ENCODE measurements at regions of chr9 and their contacts with region 1.

Region 1: GRCh38 chr9:133184962-133185361 is 21.2 kb upstream of the GBGT1 start:
- DNase-seq: peak; percentile 77
- ATAC-seq: peak; percentile 55
- H3K4me3 Mint-ChIP-seq: peak overlapping the region; percentile 31
- H3K27ac Mint-ChIP-seq: no peak overlapping the region
- H3K4me1 Mint-ChIP-seq: peaks cover 16% of the 10 kb centered on the region
- H3K27me3 Mint-ChIP-seq: peaks cover 30% of the 10 kb centered on the region
- CTCF ChIP-seq: peak; percentile 60

Region 2: DNA sequence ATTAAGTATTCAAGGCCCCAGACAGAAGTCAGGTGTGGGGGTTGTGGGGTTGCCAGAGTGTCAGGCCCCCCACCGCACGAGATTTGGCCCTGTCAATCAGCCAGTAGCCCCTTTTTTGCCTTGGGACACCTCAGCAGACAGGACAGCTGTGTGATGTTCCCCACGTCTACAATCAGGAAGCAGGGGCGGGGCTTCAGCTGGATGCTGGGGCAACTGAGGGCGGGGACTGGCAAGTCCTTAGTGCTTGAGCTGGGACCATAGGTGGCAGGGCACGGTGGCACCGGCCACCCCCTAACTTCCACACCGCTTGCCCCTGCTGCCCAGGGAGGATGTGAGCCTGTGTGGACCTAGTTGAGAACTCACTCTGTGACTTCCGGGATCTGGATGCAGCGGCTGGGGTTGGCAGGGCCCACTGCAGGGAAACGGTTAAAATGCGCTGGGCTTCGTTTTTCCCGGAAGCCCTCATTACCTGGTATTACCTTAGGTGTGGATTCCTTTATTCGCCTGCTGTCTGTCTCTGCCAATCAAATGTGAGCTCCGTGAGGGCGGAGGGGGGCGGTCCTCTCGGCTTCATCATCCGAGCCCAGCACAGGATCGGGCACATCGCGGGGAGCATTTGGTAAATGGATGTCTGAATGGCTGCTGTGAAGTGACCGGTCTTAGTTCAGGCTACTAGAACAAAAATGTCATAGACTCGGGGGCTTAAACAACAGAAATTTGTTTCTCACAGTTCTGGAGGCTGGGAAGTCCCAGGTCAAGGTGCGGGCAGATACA is 161.7 kb before region 1 on chr9:
- CTCF ChIA-PET with region 1: interaction called, 13 read pairs
- POLR2A ChIA-PET with region 1: no interaction called
- intact Hi-C with region 1: no loop called
- DNase-seq: peak; percentile 90
- ATAC-seq: peak; percentile 74
- H3K4me3 Mint-ChIP-seq: peak overlapping the region; percentile 70
- H3K27ac Mint-ChIP-seq: peak overlapping the region; percentile 77
- H3K4me1 Mint-ChIP-seq: peaks cover 23% of the 10 kb centered on the region
- H3K27me3 Mint-ChIP-seq: peaks cover 3% of the 10 kb centered on the region
- CTCF ChIP-seq: no peak

Region 3: DNA sequence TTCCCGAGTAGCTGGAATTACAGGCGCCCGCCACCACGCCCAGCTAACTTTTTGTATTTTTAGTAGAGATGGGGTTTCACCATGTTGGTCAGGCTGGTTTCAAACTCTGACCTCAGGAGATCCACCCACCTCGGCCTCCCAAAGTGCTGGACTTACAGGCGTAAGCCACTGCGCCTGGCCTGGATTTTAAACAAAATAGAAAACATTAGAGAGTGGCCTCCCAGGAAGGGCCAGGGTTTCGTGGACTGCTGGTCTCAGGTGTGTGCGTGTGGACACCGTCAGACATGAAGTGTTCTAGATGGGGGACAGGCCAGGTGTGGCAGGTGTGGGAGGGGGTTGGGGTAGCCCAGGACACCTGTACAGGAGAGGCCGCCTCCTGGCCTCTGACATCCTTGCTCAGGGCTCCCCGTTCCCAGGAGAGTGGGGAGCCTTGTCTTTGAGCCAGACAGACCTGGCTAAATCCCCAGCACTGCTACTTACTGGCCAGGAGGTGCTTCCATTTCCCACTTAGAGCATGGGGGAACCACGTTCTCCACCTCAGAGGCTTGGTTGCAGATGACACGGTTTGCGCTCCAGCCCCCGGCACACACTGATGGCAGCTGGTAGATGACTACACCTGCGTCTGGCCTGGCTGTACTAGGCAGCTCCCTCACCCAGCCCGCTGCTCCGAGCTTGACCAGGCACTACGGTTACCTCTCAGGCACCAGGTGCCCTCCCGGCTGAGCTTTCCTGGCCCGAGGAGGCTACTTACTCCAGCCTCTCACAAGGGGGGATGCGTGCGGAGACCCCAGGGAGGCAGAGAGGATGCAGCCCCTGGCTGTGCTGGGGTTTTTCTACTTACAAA is 14.0 kb before region 1 on chr9:
- CTCF ChIA-PET with region 1: interaction called, 33 read pairs
- POLR2A ChIA-PET with region 1: no interaction called
- intact Hi-C with region 1: no loop called
- DNase-seq: no peak
- ATAC-seq: no peak
- H3K4me3 Mint-ChIP-seq: no peak overlapping the region
- H3K27ac Mint-ChIP-seq: no peak overlapping the region
- H3K4me1 Mint-ChIP-seq: no peaks in the 10 kb centered on the region
- H3K27me3 Mint-ChIP-seq: peaks cover 2% of the 10 kb centered on the region
- CTCF ChIP-seq: no peak

Region 4: DNA sequence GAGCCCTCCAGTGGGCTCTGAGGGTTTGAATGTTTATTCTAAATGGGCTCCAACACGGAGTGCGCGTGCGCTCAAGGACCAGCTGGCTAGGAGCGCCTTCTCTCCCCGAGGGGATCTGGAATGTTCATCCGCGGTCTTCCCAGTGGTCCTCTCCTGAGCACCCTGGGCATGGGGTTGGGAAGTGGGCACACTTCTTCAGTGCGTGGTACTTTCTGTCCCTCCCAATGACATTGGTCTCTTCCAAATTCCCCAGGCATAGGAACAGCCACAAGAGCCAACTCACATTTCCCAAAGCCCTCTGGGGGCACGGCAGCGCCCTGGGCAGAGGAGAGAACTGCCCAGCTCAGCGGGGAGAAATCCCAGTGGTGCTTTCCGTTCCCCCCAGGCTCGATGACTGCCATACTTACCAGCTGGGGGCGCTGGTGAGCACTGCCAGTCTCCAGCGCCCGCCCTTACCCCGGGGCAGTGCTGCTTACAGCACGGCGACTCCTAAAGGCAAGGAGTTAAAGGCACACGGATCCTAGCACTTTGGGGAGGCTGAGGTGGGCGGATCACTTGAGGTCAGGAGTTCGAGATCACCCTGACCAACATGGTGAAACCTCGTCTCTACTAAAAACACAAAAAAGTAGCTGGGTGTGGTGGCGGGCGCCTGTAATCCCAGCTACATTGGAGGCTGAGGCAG is 54.0 kb after region 1 on chr9:
- CTCF ChIA-PET with region 1: interaction called, 14 read pairs
- POLR2A ChIA-PET with region 1: no interaction called
- intact Hi-C with region 1: no loop called
- DNase-seq: peak; percentile 85
- ATAC-seq: peak; percentile 97
- H3K4me3 Mint-ChIP-seq: peak overlapping the region; percentile 54
- H3K27ac Mint-ChIP-seq: no peak overlapping the region
- H3K4me1 Mint-ChIP-seq: peaks cover 3% of the 10 kb centered on the region
- H3K27me3 Mint-ChIP-seq: peaks cover 11% of the 10 kb centered on the region
- CTCF ChIP-seq: peak; percentile 83

Region 5: DNA sequence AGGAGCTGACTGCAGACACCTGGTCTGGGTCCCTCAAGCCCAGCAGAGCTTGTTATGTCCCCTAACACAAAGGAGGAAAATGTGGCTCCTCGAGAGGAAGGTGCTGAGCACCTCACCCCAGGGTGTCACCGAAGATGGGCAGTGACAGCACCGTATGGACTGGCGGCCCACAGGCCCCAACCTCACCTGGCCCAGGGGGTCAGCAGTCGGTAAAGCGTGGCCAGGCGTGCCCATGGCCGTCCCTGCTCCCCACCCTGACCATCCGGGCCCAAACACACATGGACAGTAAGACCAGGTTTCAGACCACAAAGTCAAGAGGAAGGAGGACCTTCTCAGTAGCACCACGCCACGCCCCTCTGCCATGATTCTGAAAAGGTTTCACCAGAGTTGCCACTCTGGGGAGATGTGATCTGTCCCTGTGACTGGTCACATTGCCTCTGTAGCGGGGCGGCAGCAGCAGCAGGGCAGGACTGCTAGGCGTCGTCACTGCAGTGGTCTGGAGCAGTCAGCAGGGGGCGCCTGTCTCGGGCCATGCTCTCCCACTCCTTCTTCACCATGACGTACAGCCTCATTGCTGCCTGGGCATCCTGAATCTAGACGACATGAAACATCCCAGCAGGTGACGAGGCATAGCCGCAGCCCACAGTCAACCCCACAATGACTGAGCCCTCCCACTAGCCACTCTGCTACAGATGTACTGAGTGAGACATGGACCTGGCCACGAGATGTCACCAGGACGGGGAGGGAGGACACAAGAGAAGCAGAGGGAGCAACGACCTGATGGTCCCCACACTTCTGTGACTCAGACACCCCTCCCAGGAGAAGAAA is 221.7 kb after region 1 on chr9:
- CTCF ChIA-PET with region 1: interaction called, 10 read pairs
- POLR2A ChIA-PET with region 1: no interaction called
- intact Hi-C with region 1: loop called (anchors 10 kb)
- DNase-seq: peak; percentile 89
- ATAC-seq: peak; percentile 96
- H3K4me3 Mint-ChIP-seq: no peak overlapping the region
- H3K27ac Mint-ChIP-seq: peak overlapping the region; percentile 78
- H3K4me1 Mint-ChIP-seq: peaks cover 11% of the 10 kb centered on the region
- H3K27me3 Mint-ChIP-seq: no peaks in the 10 kb centered on the region
- CTCF ChIP-seq: peak; percentile 88

Measured in activated CD8-positive, alpha-beta T cell treated with anti-CD3 and anti-CD28 coated beads for 36 hours (primary cell).